ENCODE measurements at regions of chr19 and their contacts with region 1.

Region 1: DNA sequence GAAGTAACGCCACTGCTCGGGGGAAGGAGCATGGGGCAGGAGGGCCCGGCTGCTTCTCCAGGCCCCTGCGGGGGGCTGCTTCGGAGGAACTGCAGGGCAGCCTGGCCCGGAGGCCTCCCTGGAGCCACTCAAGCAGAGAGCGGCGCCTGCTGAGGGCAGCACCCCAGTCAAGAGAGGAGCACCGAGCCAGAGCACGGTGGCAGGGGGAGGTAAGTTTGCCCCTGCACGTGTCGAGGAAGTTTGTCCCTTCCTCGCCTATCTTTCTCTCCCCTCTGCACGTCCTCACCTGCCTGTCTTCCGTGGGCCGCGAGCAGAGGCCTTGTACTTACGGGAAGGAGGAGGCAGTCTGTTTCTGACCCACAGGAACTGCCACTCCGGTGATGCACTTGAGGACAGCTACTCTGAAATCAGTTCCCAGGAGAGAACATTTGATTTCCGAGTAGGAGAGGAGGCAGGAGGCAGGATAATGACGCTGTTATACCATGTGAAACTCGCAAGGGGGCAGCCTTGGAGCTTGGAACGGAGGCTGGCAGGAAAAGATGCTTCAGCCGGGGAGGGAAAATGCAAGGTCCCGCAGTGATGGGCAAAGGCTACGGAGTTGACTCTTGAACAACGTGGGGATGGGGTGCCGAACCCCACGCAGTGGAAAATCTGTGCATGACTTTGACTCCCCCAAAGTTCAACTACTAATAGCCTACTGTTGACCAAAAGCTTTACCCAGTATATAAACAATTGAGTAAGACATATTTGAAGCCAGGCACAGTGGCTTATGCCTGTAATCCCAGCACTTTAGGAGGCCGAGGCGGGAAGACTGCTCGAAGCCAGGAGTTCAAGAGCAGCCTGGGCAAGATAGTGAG is 5.0 kb downstream of the FFAR1 start:
- DNase-seq: peak; percentile 84
- CTCF ChIP-seq: peak; percentile 84

Region 2: GRCh38 chr19:35468637-35469036 is 116.0 kb after region 1 on chr19:
- in situ Hi-C with region 1: loop called (anchors 10 kb)
- DNase-seq: peak; percentile 82
- CTCF ChIP-seq: peak; percentile 80

Region 3: GRCh38 chr19:35495107-35496064 is 142.7 kb after region 1 on chr19:
- in situ Hi-C with region 1: loop called (anchors 10 kb)
- DNase-seq: peak; percentile 92
- CTCF ChIP-seq: peak; percentile 96

Measured in GM13976 (cell line).